Thyroid gland (tissue), 4 donors: ENCODE measurements at regions of chr18 and their contacts with region 1.

Region 1: GRCh38 chr18:63025251-63026090 is 294.1 kb downstream of the BCL2 start:
- DNase-seq: peak; percentile 37 to 51
- H3K4me3 ChIP-seq: no peak overlapping the region
- H3K27ac ChIP-seq: no peak overlapping the region
- H3K4me1 ChIP-seq: no peaks in the 10 kb centered on the region
- H3K27me3 ChIP-seq: no peaks in the 10 kb centered on the region
- CTCF ChIP-seq: peak in 3 of 6 experiments; percentile 20 to 42 (median 33)
- POLR2A ChIP-seq: no peak

Region 2: GRCh38 chr18:62964432-62964831 is 61.0 kb before region 1 on chr18:
- intact Hi-C with region 1: no loop called
- DNase-seq: no peak
- H3K4me3 ChIP-seq: no peak overlapping the region
- H3K27ac ChIP-seq: no peak overlapping the region
- H3K4me1 ChIP-seq: no peaks in the 10 kb centered on the region
- H3K27me3 ChIP-seq: no peaks in the 10 kb centered on the region
- CTCF ChIP-seq: no peak
- POLR2A ChIP-seq: no peak

Region 3: GRCh38 chr18:63141778-63142176 is 116.3 kb after region 1 on chr18:
- intact Hi-C with region 1: loop called (anchors 10 kb)
- DNase-seq: no peak
- H3K4me3 ChIP-seq: no peak overlapping the region
- H3K27ac ChIP-seq: no peak overlapping the region
- H3K4me1 ChIP-seq: peaks cover 45 to 78% of the 10 kb centered on the region in 2 donors
- H3K27me3 ChIP-seq: no peaks in the 10 kb centered on the region
- CTCF ChIP-seq: no peak
- POLR2A ChIP-seq: no peak

Region 4: DNA sequence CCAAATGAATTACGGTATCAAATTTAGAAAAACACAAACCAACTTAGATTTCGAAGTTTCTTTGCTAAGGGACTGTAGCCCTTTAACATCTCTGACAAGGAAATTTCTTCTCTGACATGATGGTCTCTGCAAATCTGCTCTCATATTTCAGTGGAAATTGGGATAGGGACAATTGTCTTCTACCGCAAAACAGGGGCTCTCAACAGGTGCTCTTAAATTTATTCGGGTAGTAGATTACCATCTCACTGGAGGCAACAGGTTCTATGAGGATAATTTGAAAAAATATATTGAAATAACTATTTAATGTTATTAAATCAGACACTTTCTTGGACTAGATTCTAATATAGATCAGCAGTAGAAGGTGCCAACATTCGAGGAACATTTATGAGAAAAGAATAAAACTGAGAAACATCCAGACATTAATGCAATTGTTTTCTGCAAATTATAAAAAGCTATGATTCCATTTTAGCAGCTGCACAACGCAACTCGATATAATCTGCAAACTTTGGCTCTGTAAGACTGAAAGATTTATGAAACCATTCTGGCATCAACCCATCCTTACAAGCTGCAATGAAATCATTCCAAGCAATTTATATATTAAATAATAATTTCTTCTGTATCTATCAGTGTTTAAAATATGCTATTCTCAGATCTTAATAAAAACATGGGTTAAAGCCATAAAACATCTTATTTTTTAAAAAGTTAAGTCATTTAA is 304.1 kb after region 1 on chr18:
- intact Hi-C with region 1: no loop called
- DNase-seq: no peak
- H3K4me3 ChIP-seq: no peak overlapping the region
- H3K27ac ChIP-seq: no peak overlapping the region
- H3K4me1 ChIP-seq: no peaks in the 10 kb centered on the region
- H3K27me3 ChIP-seq: no peaks in the 10 kb centered on the region
- CTCF ChIP-seq: no peak
- POLR2A ChIP-seq: no peak